Activated CD4-positive, alpha-beta memory T cell treated with anti-CD3 and anti-CD28 coated beads for 36 hours (primary cell): ENCODE measurements at regions of chr19 and their contacts with region 1.

Region 1: DNA sequence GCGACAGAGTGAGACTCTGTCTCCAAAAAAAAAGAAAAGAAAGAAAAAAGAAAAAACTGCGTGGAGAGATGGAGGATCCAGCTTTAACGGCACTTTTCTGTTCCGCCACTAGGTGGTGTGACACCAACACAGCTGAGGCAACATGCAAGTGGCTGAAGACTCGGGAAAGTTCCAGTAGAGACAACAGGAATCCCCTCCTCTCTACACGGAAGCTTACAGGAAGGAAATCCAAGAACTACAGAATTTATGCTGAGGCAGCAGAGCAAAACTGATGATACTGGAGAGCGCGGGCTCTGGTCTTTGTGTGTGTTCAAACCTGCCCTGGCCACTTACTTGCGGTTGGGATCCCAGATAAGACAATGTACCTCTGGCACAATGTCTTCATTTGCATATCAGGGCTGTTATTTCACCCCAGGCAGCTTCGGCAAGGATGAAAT is 9.9 kb downstream of the RANBP3 start:
- DNase-seq: peak; percentile 76
- H3K4me3 Mint-ChIP-seq: peak overlapping the region; percentile 51
- H3K27ac Mint-ChIP-seq: peak overlapping the region; percentile 82
- H3K4me1 Mint-ChIP-seq: peaks cover 75% of the 10 kb centered on the region
- H3K27me3 Mint-ChIP-seq: no peaks in the 10 kb centered on the region

Region 2: DNA sequence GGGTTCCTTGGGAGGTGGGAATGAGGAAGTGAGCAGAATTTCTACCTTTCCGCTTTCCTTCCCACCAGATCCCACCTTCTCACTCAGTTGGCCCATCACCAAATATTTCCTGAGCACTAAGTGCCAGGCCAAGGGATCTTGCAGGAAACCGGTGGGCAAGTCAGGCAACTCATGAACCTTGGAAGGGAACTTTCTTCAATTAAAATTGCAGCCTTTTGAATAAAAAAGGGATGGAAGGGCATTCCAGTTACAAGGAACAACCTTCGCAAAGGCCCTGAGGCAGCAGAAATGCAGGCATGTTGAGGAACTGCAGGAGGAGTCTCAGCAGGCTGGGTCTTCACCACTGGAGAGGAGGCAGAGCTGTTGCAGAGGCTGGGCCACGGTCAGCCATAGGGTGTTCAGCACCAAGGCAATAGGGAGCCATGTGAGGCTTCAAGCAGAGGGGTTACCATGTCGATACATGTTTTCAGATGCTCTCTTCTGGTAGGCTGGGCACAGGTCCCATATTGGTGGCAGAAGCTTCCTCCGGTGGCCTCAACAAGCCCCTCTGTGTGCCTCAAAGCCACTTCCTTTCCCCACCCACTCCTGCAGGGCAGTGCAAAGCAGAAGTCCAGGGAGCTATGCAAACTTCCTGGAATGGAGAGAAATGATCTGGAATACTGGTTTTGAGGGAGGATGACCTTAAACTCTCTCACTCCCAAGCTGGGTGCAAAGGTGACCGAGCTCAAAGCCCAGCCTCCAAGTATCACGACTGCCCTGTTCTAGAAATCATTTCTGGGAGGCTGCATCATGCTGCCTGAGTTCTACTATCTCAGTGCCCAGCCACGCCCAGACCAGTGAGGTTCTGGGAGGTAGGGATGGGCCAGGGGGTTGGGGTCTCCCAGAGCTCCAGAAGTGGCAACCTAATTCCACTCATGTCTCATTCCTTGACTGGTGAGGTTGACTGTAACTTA is 128.7 kb before region 1 on chr19 and contains the start of gene FUT6:
- CTCF ChIA-PET with region 1: no interaction called
- POLR2A ChIA-PET with region 1: no interaction called
- intact Hi-C with region 1: no loop called
- DNase-seq: no peak
- H3K4me3 Mint-ChIP-seq: no peak within 1 kb of the TSS
- H3K27ac Mint-ChIP-seq: no peak within 1 kb of the TSS
- H3K4me1 Mint-ChIP-seq: no peaks in the 10 kb centered on the region
- H3K27me3 Mint-ChIP-seq: peaks cover 3% of the 10 kb centered on the region
- total RNA-seq, gene FUT6: not detected

Region 3: GRCh38 chr19:5953680-5954213 is 14.3 kb before region 1 on chr19:
- CTCF ChIA-PET with region 1: interaction called, 37 read pairs
- POLR2A ChIA-PET with region 1: no interaction called
- intact Hi-C with region 1: no loop called
- DNase-seq: peak; percentile 64
- H3K4me3 Mint-ChIP-seq: peak overlapping the region; percentile 64
- H3K27ac Mint-ChIP-seq: peak overlapping the region; percentile 95
- H3K4me1 Mint-ChIP-seq: peaks cover 91% of the 10 kb centered on the region
- H3K27me3 Mint-ChIP-seq: no peaks in the 10 kb centered on the region

Region 4: GRCh38 chr19:5987077-5987818 is 19.2 kb after region 1 on chr19:
- CTCF ChIA-PET with region 1: interaction called, 31 read pairs
- POLR2A ChIA-PET with region 1: interaction called, 3 read pairs
- intact Hi-C with region 1: no loop called
- DNase-seq: peak; percentile 82
- H3K4me3 Mint-ChIP-seq: peak overlapping the region; percentile 67
- H3K27ac Mint-ChIP-seq: no peak overlapping the region
- H3K4me1 Mint-ChIP-seq: peaks cover 30% of the 10 kb centered on the region
- H3K27me3 Mint-ChIP-seq: no peaks in the 10 kb centered on the region

Region 5: DNA sequence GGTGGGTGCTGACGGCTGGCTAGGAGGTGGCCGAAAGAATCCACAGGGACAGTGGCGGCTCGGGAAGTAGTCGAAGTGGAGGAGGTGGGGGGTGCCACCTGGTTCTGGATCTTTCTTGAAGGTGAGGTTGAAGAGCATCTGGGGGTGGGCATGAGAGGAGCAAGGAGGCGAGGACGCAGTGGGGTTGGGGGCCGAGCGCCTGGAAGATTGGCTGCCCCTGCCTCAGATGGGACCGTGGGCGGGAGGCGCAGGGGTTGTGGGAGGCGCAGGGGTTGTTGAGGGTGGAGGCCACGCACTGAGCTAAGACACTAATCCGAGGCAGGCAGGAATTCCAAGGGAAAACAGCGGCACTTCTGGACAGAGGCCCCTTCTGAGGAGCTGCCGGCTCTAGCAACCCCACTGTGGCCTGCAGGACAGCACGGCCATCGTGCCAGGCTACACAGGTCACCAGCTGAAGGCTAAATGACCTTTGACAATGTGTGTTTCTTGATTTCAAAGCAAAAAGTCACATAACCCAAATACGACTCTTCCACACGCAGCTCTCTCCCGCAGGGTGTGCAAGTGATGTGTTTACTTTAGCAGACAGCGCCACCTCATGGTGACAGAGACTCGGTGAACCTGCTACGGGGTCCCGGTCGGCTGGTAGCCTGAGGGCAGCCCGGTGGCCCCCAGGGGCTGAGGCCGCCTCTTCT is 54.0 kb after region 1 on chr19:
- CTCF ChIA-PET with region 1: interaction called, 44 read pairs
- POLR2A ChIA-PET with region 1: no interaction called
- intact Hi-C with region 1: no loop called
- DNase-seq: peak; percentile 86
- H3K4me3 Mint-ChIP-seq: no peak overlapping the region
- H3K27ac Mint-ChIP-seq: no peak overlapping the region
- H3K4me1 Mint-ChIP-seq: no peaks in the 10 kb centered on the region
- H3K27me3 Mint-ChIP-seq: peaks cover 8% of the 10 kb centered on the region